PC-3 (cell line): ENCODE measurements at regions of chr2 and their contacts with region 1.

Region 1: DNA sequence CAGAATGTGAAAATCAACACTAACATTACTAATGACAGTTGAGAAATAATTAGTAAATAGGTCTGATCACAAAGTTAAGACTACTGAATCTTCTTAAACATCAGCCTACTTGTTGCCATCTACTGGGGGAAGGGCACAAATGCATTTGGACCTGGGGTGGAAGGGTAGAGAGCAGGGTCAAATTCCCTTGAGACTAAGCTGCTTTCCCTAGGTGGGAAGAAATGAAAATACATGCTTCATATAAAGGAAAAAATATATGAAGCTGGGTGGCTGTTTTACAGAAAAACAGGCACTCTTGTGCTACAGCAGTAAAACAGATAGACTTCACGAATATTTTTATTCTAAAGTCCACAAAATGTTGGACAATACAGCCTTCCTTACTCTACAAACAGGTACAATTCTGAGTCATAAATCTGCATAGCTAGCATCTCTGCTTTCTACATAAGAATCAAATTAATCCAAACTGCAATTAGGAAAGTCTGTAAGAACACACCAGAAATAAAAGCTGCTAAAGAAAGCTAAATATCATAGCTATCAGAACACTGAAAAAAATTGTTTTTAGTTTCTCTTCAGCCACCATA is 10.9 kb downstream of the TRIP12 start:
- DNase-seq: peak; percentile 20
- ATAC-seq: peak; percentile 77
- H3K4me3 ChIP-seq: no peak overlapping the region
- H3K27ac ChIP-seq: no peak overlapping the region
- H3K4me1 ChIP-seq: no peaks in the 10 kb centered on the region
- H3K27me3 ChIP-seq: no peaks in the 10 kb centered on the region
- CTCF ChIP-seq: peak; percentile 59

Region 2: GRCh38 chr2:229800997-229801754 is 109.7 kb before region 1 on chr2:
- CTCF ChIA-PET with region 1: interaction called, 6 read pairs
- POLR2A ChIA-PET with region 1: no interaction called
- intact Hi-C with region 1: loop called (anchors 2 kb)
- DNase-seq: peak; percentile 74
- ATAC-seq: peak; percentile 76
- H3K4me3 ChIP-seq: no peak overlapping the region
- H3K27ac ChIP-seq: no peak overlapping the region
- H3K4me1 ChIP-seq: 0 out of 2 replicates have a peak, but pooled peaks cover 1% of the 10 kb centered on the region
- H3K27me3 ChIP-seq: no peaks in the 10 kb centered on the region
- CTCF ChIP-seq: peak; percentile 86

Region 3: DNA sequence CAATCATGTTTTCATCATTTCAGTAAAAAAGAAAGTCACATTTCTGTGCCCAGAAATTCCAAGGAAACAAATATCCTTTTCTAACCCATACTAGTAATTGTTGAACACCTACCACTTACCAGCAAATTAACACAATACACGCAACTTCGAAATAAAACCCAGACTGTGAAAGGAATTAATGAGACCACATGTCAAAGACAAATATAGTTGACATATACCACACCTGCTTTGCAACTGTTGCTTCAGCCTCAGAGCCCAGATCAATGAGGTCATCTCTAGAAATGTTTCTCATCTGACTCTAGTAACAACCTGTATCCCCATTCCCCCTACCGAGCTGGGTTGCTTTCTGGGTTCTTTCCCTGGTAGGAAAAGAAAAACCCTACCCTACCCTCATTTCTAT is 41.7 kb before region 1 on chr2:
- CTCF ChIA-PET with region 1: no interaction called
- POLR2A ChIA-PET with region 1: no interaction called
- intact Hi-C with region 1: loop called (anchors 10 kb)
- DNase-seq: no peak
- ATAC-seq: no peak
- H3K4me3 ChIP-seq: no peak overlapping the region
- H3K27ac ChIP-seq: no peak overlapping the region
- H3K4me1 ChIP-seq: no peaks in the 10 kb centered on the region
- H3K27me3 ChIP-seq: no peaks in the 10 kb centered on the region
- CTCF ChIP-seq: no peak